ENCODE measurements at regions of chr14 and their contacts with region 1.

Region 1: DNA sequence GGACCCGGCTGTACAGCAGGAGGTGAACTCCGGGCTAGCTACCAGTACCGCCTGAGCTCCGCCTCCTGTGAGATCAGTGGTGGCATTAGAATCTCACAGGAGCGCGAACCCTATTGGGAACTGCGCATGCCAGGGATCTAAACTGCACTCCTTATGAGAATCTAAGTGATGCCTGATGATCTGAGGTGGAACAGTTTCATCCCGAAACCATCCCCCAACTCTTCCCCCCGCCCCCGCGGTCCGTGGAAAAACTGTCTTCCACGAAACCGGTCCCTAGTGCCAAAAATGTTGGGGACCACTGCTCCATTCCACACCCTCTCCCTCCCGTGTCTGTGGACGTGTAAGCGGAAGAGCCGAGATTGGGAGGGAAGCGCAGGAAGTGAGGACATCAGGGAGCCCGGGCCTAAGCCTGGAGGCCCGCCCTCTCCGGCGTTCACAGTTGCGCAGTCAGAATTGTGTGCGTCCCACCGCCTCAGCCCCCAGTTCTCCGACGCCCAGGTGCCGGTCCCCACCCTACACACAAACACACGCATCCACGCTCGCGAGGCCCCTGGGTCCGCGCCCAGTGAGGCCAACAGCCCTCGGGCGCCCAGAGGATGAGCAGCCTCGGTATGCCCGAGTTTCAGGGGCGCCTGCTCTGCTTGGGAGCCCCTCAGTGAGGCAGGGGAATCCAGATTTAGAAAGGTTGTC is 1.8 kb upstream of the RNASE4 start:
- DNase-seq: peak; percentile 89 to 95 (median 93)
- ATAC-seq: peak; percentile 91 to 94 (median 92)
- H3K4me3 ChIP-seq: peak overlapping the region; percentile 47 to 95 (median 75)
- H3K27ac ChIP-seq: peak overlapping the region; percentile 96 to 100 (median 100)
- H3K4me1 ChIP-seq: peaks cover 0 to 37% (median 19%) of the 10 kb centered on the region in 12 donors
- H3K27me3 ChIP-seq: no peaks in the 10 kb centered on the region
- CTCF ChIP-seq: peak in 3 of 12 donors; percentile 0 to 39 (median 30)
- POLR2A ChIP-seq: peak; percentile 8 to 91

Region 2: DNA sequence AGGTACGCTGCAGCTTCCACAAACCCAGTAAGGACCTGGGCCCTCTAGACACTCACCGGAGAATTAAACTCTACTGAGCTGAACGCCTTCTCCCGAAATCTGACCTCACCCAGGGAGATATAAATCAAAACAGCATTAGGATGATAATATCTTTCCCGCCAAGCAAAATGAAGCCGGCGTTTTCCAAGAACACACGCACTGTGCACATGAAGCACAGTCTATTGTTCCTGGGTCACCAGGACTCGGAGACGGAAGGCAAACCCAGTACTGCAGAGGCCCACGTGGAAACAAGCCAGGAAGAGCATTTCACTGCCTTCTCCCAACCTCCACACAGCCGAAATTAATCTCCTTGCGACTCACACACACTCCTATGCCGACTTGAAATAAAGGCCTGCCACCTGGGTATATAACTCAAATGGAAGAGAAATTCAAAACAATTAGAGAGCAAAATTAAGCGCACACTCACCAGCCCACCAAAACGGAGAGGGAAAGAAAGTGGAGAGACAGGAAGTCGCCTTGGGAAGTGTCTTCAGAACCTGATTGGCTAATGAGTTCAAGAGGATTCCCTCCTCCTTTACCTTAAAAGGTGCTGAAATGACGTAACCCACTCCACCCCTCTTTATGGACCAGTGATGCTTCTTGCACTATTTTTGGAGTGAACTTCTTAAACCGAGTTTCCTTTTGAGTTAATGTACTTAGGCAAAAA is 349.6 kb before region 1 on chr14 and contains the start of gene CCNB1IP1:
- intact Hi-C with region 1: loop called in 7 of 10 experiments (anchors 2 to 5 kb)
- DNase-seq: peak in 4 of 5 donors; percentile 57 to 78 (median 66)
- ATAC-seq: peak; percentile 98 to 99 (median 99)
- H3K4me3 ChIP-seq: peak within 1 kb of the TSS; percentile 17 to 75 (median 68)
- H3K27ac ChIP-seq: peak within 1 kb of the TSS; percentile 59 to 94 (median 88)
- H3K4me1 ChIP-seq: peaks cover 0 to 26% (median 15%) of the 10 kb centered on the region in 12 donors
- H3K27me3 ChIP-seq: no peaks in the 10 kb centered on the region
- CTCF ChIP-seq: no peak
- POLR2A ChIP-seq: no peak
- total RNA-seq, gene CCNB1IP1: 24.5 to 85.6 (median 53.0) TPM

Region 3: GRCh38 chr14:20454516-20455354 is 227.8 kb before region 1 on chr14 and contains the starts of genes APEX1 and OSGEP:
- intact Hi-C with region 1: loop called in 3 of 10 experiments (anchors 2 to 10 kb)
- DNase-seq: peak; percentile 98 to 99 (median 99)
- ATAC-seq: peak; percentile 95 to 97 (median 96)
- H3K4me3 ChIP-seq: peak within 1 kb of the TSS; percentile 71 to 92 (median 81)
- H3K27ac ChIP-seq: peak within 1 kb of the TSS; percentile 88 to 98 (median 93)
- H3K4me1 ChIP-seq: peaks cover 0 to 53% (median 26%) of the 10 kb centered on the region in 12 donors
- H3K27me3 ChIP-seq: no peaks in the 10 kb centered on the region
- CTCF ChIP-seq: peak in 1 of 12 donors; percentile 6
- POLR2A ChIP-seq: peak in 1 of 2 donors; percentile 89
- total RNA-seq, gene APEX1: 60.4 to 92.6 (median 76.4) TPM
- total RNA-seq, gene OSGEP: 16.1 to 40.9 (median 18.5) TPM

Region 4: GRCh38 chr14:20613094-20614037 is 69.2 kb before region 1 on chr14:
- intact Hi-C with region 1: loop called (anchors 1 to 5 kb)
- DNase-seq: peak; percentile 67 to 84 (median 81)
- ATAC-seq: peak; percentile 79 to 89 (median 85)
- H3K4me3 ChIP-seq: peak overlapping the region; percentile 15 to 74 (median 58)
- H3K27ac ChIP-seq: peak overlapping the region in 10 of 12 donors; percentile 21 to 82 (median 59)
- H3K4me1 ChIP-seq: peaks cover 0 to 60% (median 7%) of the 10 kb centered on the region in 12 donors
- H3K27me3 ChIP-seq: peaks cover 0 to 3% (median 0%) of the 10 kb centered on the region in 9 donors
- CTCF ChIP-seq: peak; percentile 38 to 86 (median 74)
- POLR2A ChIP-seq: no peak

Region 5: GRCh38 chr14:20662968-20663732 is 19.4 kb before region 1 on chr14:
- intact Hi-C with region 1: no loop called
- DNase-seq: peak in 4 of 5 donors; percentile 38 to 77 (median 43)
- ATAC-seq: peak; percentile 23 to 76 (median 56)
- H3K4me3 ChIP-seq: peak overlapping the region in 9 of 12 donors; percentile 14 to 44 (median 36)
- H3K27ac ChIP-seq: no peak overlapping the region
- H3K4me1 ChIP-seq: peaks cover 0 to 17% (median 1%) of the 10 kb centered on the region in 12 donors
- H3K27me3 ChIP-seq: peaks cover 4 to 96% (median 38%) of the 10 kb centered on the region in 9 donors
- CTCF ChIP-seq: peak in 10 of 12 donors; percentile 15 to 46 (median 32)
- POLR2A ChIP-seq: no peak

Region 6: GRCh38 chr14:20970983-20971704 is 288.6 kb after region 1 on chr14:
- intact Hi-C with region 1: loop called in 2 of 10 experiments (anchors 5 to 10 kb)
- DNase-seq: peak; percentile 85 to 93 (median 86)
- ATAC-seq: peak; percentile 92 to 97 (median 96)
- H3K4me3 ChIP-seq: peak overlapping the region; percentile 43 to 73 (median 64)
- H3K27ac ChIP-seq: peak overlapping the region in 11 of 12 donors; percentile 14 to 83 (median 58)
- H3K4me1 ChIP-seq: peaks cover 0 to 13% (median 5%) of the 10 kb centered on the region in 12 donors
- H3K27me3 ChIP-seq: no peaks in the 10 kb centered on the region
- CTCF ChIP-seq: peak; percentile 68 to 90 (median 76)
- POLR2A ChIP-seq: no peak

Region 7: GRCh38 chr14:21383848-21384493 is 701.4 kb after region 1 on chr14 and contains the start of gene SUPT16H:
- intact Hi-C with region 1: loop called in 1 of 10 experiments (anchors 10 kb)
- DNase-seq: peak; percentile 95 to 98 (median 97)
- ATAC-seq: peak; percentile 98 to 99 (median 98)
- H3K4me3 ChIP-seq: peak within 1 kb of the TSS; percentile 63 to 97 (median 71)
- H3K27ac ChIP-seq: peak within 1 kb of the TSS; percentile 29 to 97 (median 90)
- H3K4me1 ChIP-seq: peaks cover 0 to 48% (median 29%) of the 10 kb centered on the region in 12 donors
- H3K27me3 ChIP-seq: no peaks in the 10 kb centered on the region
- CTCF ChIP-seq: peak in 1 of 12 donors; percentile 12
- POLR2A ChIP-seq: no peak
- total RNA-seq, gene SUPT16H: 25.1 to 38.1 (median 29.6) TPM

Measured in heart left ventricle (tissue), 16 donors.